ENCODE measurements at regions of chr13 and their contacts with region 1.

Region 1: DNA sequence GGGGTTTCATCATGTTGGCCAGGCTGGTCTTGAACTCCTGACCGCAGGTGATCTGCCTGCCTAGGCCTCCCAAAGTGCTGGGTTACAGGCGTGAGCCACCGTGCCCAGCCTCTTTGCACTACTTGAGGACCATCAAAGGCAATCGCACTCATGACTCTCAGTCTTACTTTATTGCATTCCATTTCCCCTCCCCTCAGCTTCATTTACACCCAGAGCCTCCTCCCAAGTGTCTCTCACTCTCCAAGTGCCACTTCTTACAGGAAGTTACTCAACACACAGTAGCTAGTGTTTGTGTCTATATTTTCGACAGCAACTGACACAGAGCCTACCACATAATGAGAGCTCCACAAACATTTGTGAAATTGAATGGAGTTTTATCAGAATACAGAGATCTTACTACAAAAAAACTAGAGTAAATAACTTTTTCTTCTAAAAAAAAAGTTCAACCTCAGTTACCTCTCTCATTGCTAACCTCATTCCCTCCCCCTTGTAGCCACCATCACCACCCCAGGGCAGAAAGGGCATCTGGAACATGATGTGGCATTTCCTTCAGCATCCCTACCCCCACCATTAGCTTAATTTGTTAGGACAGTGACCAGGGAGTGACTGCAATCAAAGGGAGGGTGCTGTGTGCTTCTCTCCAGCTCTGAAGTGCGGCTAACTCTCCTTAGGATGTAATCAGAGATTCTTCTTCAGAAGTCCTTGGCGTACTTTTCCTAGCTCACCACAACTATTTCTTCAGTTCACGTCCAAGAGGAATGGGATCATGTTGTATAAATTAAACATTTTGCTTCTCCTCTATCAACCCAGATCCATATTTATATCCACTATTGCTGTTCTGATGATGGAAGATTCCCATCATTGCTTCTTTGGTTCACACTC is 17.0 kb upstream of the RUBCNL start:
- H3K4me3 Mint-ChIP-seq: peak overlapping the region; percentile 18
- H3K27ac Mint-ChIP-seq: peak overlapping the region; percentile 87
- H3K4me1 Mint-ChIP-seq: peaks cover 57% of the 10 kb centered on the region
- H3K27me3 Mint-ChIP-seq: no peaks in the 10 kb centered on the region

Region 2: GRCh38 chr13:46369506-46370277 is 34.4 kb before region 1 on chr13:
- intact Hi-C with region 1: no loop called
- H3K4me3 Mint-ChIP-seq: no peak overlapping the region
- H3K27ac Mint-ChIP-seq: peak overlapping the region; percentile 33
- H3K4me1 Mint-ChIP-seq: peaks cover 49% of the 10 kb centered on the region
- H3K27me3 Mint-ChIP-seq: no peaks in the 10 kb centered on the region

Region 3: DNA sequence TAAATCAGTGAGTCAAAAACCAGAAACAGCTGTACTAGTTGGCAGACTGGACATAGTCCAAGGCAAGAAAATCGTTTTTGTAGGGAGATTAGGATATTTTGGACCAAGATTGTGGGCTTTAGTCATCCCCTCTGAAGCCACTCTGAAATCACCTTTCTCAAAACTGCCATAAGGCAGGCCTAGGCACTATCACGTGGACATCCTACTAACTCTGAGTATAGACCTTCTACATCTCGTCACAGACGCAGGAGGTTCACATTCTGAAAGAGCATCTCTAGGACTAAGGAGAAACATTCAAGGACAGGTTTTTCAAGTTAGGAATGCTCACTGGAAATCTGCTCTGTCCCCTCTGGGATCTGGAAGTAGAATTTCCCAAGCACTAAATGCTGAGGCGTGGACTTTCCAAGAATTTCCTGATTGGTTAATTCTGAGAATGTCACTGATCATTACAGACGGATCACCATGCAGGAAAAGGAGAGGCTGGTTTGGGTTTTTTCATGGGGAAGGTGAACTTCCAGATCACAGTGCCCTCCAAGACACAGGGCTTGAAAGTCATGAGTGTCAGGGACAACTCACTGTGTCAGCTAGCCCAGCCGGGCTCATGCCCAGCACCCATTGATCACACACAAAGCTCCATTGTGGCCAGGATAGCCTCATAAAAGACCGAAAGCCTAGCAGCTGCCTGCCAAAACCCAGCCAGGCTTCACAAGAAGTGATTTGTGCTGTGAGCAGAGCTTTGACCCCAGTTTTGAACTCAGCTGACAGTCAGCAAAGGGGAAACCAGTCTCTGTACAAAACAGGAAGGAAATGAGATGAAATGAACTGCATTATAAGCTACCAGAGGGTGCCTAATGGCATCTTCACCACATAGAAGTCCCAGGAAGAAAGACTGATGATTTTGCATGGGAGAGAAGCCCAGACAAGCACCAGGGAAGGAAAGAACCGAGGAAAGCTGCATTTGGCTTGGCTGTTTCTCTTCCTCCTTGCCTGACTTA is 14.3 kb before region 1 on chr13:
- intact Hi-C with region 1: loop called (anchors 2 kb)
- H3K4me3 Mint-ChIP-seq: peak overlapping the region; percentile 50
- H3K27ac Mint-ChIP-seq: peak overlapping the region; percentile 89
- H3K4me1 Mint-ChIP-seq: peaks cover 51% of the 10 kb centered on the region
- H3K27me3 Mint-ChIP-seq: peaks cover 23% of the 10 kb centered on the region

Measured in dendritic cell treated with granulocyte-macrophage colony-stimulating factor and Interleukin-4, amounts not matched to agents 40 ng/mL and 50 ng/mL, for 4 days (primary cell).